ENCODE measurements at regions of chr12 and their contacts with region 1.

Region 1: GRCh38 chr12:31682136-31682962 is 22.9 kb downstream of the ETFBKMT start:
- DNase-seq: peak; percentile 46 to 89 (median 66)
- ATAC-seq: peak; percentile 98
- H3K4me3 ChIP-seq: no peak overlapping the region
- H3K4me3 Mint-ChIP-seq: peak overlapping the region; percentile 13
- H3K27ac ChIP-seq: peak overlapping the region in 1 of 2 experiments; percentile 31
- H3K27ac Mint-ChIP-seq: peak overlapping the region; percentile 75
- H3K4me1 ChIP-seq: no peaks in the 10 kb centered on the region
- H3K4me1 Mint-ChIP-seq: peaks cover 9% of the 10 kb centered on the region
- H3K27me3 ChIP-seq: no peaks in the 10 kb centered on the region
- H3K27me3 Mint-ChIP-seq: no peaks in the 10 kb centered on the region
- CTCF ChIP-seq: peak; percentile 82

Region 2: DNA sequence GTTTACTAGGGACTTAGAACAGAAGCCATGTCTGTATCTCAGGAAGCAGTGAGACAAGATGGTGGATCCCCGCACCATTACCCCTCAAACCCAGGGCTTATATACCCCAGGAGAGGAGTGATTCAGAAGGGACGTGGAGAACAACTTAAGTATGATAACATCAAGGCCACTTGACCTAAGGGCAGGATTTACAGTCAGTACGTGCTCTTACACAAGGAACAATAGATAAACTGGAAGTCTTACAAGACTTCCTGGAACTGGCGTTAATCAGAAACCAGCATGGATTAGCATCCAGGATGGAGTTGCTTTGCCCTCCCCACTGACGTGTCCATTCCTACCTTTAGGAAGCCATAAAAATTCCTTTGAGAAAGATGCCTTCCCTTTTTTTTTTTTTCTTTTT is 31.4 kb before region 1 on chr12:
- CTCF ChIA-PET with region 1: interaction called, 13 read pairs
- POLR2A ChIA-PET with region 1: no interaction called
- intact Hi-C with region 1: loop called (anchors 1 to 2 kb)
- DNase-seq: no peak
- ATAC-seq: no peak
- H3K4me3 ChIP-seq: no peak overlapping the region
- H3K4me3 Mint-ChIP-seq: no peak overlapping the region
- H3K27ac ChIP-seq: no peak overlapping the region
- H3K27ac Mint-ChIP-seq: no peak overlapping the region
- H3K4me1 ChIP-seq: peaks cover 6% of the 10 kb centered on the region
- H3K4me1 Mint-ChIP-seq: peaks cover 12% of the 10 kb centered on the region
- H3K27me3 ChIP-seq: no peaks in the 10 kb centered on the region
- H3K27me3 Mint-ChIP-seq: no peaks in the 10 kb centered on the region
- CTCF ChIP-seq: no peak

Region 3: DNA sequence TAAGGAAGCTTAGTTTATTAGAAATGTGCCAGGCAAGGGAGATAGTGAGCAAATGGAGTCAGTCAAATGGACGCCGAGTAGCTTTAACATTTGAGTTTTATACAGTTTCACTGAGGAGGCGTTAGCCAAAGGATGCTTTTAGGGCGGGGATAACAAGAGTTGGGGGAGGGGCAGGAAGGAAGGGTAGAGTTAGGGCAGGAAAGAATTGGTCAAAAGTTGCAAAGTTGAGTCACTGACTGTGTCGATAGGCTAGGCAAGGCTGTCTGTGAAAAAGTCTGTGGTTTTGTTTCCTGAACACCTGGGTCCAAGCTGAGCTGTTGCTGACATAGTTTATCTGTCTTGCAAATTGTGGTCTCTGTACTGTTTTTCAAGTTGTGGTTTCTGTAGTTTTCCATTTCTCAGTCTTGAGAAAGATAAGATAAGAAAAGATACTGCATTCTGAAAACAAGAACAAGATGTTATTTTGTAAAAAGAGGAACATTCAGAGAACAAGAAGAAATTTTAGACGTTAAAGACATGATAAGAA is 214.2 kb after region 1 on chr12:
- CTCF ChIA-PET with region 1: interaction called, 8 read pairs
- POLR2A ChIA-PET with region 1: interaction called, 3 read pairs
- intact Hi-C with region 1: loop called in 1 of 2 experiments (anchors 10 kb)
- DNase-seq: peak; percentile 70 to 98 (median 85)
- ATAC-seq: peak; percentile 93
- H3K4me3 ChIP-seq: no peak overlapping the region
- H3K4me3 Mint-ChIP-seq: peak overlapping the region; percentile 56
- H3K27ac ChIP-seq: peak overlapping the region; percentile 64 to 79
- H3K27ac Mint-ChIP-seq: peak overlapping the region; percentile 96
- H3K4me1 ChIP-seq: peaks cover 70% of the 10 kb centered on the region
- H3K4me1 Mint-ChIP-seq: peaks cover 52% of the 10 kb centered on the region
- H3K27me3 ChIP-seq: no peaks in the 10 kb centered on the region
- H3K27me3 Mint-ChIP-seq: no peaks in the 10 kb centered on the region
- CTCF ChIP-seq: no peak

Region 4: GRCh38 chr12:32062881-32063280 is 380.5 kb after region 1 on chr12:
- CTCF ChIA-PET with region 1: no interaction called
- POLR2A ChIA-PET with region 1: no interaction called
- intact Hi-C with region 1: loop called (anchors 1 to 2 kb)
- DNase-seq: no peak
- ATAC-seq: no peak
- H3K4me3 ChIP-seq: no peak overlapping the region
- H3K4me3 Mint-ChIP-seq: no peak overlapping the region
- H3K27ac ChIP-seq: no peak overlapping the region
- H3K27ac Mint-ChIP-seq: no peak overlapping the region
- H3K4me1 ChIP-seq: peaks cover 4% of the 10 kb centered on the region
- H3K4me1 Mint-ChIP-seq: peaks cover 13% of the 10 kb centered on the region
- H3K27me3 ChIP-seq: no peaks in the 10 kb centered on the region
- H3K27me3 Mint-ChIP-seq: no peaks in the 10 kb centered on the region
- CTCF ChIP-seq: no peak

Region 5: GRCh38 chr12:32302218-32303173 is 620.1 kb after region 1 on chr12:
- CTCF ChIA-PET with region 1: interaction called, 4 read pairs
- POLR2A ChIA-PET with region 1: no interaction called
- intact Hi-C with region 1: loop called (anchors 1 to 2 kb)
- DNase-seq: peak in 1 of 9 experiments; percentile 35
- ATAC-seq: no peak
- H3K4me3 ChIP-seq: no peak overlapping the region
- H3K4me3 Mint-ChIP-seq: no peak overlapping the region
- H3K27ac ChIP-seq: no peak overlapping the region
- H3K27ac Mint-ChIP-seq: no peak overlapping the region
- H3K4me1 ChIP-seq: no peaks in the 10 kb centered on the region
- H3K4me1 Mint-ChIP-seq: peaks cover 5% of the 10 kb centered on the region
- H3K27me3 ChIP-seq: no peaks in the 10 kb centered on the region
- H3K27me3 Mint-ChIP-seq: no peaks in the 10 kb centered on the region
- CTCF ChIP-seq: peak; percentile 21

Measured in CD8-positive, alpha-beta T cell (primary cell).